Prostate gland (tissue), 2 donors: ENCODE measurements at regions of chr3 and their contacts with region 1.

Region 1: DNA sequence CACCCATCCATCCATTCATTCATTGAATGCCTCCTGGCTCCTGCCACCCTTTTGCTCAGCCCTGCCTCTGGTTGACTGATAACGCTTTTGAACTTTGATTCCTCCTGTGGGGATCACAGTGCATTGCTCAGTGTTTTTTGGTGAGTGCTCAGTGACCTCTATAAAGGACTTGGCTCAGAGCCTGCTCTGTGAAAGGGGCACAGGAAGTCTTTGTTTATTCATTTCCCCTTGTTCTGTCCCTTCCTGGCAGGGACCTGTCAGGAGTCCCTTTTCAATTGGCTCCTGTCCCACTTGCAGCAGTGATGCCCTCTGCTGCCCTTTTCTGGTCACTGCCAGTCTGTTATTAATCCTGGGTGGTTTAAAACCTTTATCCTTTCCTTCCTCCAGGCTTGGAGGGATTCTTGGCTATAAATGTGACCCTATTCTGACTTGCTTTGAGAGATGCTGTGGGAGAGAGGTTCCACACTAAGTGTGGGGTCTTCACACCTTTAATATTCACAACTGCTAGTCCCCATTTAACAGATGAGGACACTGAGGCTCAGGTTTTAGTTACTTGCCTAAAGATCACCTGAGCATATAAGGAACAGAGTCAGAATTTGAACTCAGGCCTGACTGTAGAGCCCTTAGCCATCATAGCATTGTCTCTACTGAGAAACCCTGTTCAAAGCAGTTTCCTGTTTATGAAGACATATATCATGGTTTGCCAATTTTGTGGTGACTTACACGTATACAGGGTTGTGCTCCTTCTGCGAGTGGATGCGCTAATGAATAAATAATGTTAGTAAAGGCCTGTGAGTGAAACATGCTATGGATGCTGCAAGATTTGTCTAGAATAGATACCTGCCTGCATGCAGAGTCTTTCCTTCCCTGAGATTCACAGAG is 23.2 kb upstream of the TATDN2 start:
- DNase-seq: peak; percentile 70
- H3K4me3 ChIP-seq: no peak overlapping the region
- H3K27ac ChIP-seq: no peak overlapping the region
- H3K4me1 ChIP-seq: no peaks in the 10 kb centered on the region
- H3K27me3 ChIP-seq: no peaks in the 10 kb centered on the region
- CTCF ChIP-seq: peak; percentile 55 to 91 (median 87)
- POLR2A ChIP-seq: no peak

Region 2: DNA sequence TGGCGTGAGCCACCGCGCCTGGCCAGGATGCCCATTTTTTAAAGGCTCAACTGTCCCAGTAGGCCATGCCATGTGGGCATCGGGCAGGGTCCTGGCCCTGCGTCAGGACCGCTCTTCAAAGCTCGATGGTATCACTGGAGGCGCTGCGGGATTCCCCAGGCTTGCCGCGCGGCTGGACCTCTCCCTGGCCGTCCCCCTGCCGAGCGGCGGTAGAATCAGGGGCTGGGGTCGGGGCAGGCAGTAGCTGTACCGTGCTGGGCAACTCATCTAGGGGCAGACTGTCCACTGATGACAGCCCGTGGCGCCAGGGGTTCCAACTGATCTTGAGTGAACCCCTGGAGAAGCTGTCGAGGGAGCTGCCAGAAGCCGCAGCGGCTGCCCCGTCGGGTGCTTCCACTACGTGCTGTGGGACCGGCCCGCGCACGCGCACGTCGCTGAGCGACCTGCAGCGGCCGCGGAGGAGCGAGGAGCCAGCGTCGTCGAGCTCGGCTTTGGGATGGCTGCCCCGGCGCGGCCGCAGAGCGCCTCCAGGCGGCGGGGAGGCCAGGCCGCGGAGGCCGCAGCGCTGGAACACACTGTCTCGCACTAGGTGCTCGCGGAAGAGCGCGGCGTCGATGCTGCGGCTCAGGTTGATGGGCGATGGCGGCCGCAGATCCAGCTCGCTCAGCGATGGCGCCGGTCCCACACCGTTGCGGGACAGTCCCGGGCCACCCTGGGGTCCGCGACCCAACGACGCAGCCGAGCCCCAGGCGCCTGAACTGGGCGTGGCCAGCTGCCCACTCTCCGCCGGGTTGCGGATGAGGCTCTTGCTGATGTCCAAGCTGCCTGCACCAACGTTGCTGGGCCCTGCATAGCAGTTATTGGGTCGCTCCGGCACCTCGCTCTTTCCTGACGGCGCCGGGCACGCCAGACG is 278.7 kb before region 1 on chr3:
- intact Hi-C with region 1: loop called (anchors 10 kb)
- DNase-seq: peak; percentile 79
- H3K4me3 ChIP-seq: peak overlapping the region; percentile 31 to 44
- H3K27ac ChIP-seq: peak overlapping the region; percentile 77 to 81
- H3K4me1 ChIP-seq: no peaks in the 10 kb centered on the region
- H3K27me3 ChIP-seq: no peaks in the 10 kb centered on the region
- CTCF ChIP-seq: peak; percentile 43 to 93 (median 66)
- POLR2A ChIP-seq: peak; percentile 55

Region 3: DNA sequence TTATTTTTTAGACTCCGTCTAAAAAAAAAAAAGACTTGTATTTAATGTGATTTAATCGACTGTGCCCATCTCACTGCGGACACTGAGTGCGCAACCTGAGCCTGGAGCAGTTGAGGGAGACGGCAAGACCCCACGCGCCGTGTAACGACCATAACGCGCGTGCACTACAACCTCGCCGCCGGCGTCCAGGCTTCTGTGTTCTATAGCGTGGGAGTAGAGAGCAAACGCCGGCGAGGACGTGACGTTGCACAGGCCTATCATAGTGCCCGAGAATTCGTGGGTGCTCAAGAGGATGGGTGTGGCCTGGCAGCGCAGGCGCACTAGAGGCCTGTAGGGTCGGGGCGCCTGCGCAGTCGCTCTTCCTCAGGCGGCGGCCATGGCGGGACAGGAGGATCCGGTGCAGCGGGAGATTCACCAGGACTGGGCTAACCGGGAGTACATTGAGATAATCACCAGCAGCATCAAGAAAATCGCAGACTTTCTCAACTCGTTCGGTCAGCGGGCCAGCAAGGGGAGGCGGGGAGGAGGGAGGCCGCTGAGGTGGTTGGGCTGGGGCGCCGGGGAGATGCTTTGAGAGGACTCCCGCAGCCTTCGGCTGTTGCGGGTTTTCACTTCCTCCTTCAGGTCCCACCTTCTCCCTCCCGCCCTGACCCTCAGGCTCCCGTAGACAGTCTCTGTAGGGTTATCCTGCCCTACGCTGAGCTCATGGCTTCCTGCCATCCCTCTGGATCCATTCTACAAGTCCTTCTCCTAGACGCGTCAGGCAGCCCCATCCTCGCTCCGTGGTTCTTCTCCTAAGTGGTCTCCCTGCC is 109.5 kb before region 1 on chr3 and contains the start of gene BRK1:
- intact Hi-C with region 1: loop called (anchors 10 kb)
- DNase-seq: peak; percentile 94
- H3K4me3 ChIP-seq: peak within 1 kb of the TSS; percentile 75 to 84
- H3K27ac ChIP-seq: peak within 1 kb of the TSS; percentile 68 to 74
- H3K4me1 ChIP-seq: no peaks in the 10 kb centered on the region
- H3K27me3 ChIP-seq: no peaks in the 10 kb centered on the region
- CTCF ChIP-seq: peak in 2 of 4 experiments; percentile 21 to 27
- POLR2A ChIP-seq: peak; percentile 83
- total RNA-seq, gene BRK1: 118 to 126 TPM

Region 4: DNA sequence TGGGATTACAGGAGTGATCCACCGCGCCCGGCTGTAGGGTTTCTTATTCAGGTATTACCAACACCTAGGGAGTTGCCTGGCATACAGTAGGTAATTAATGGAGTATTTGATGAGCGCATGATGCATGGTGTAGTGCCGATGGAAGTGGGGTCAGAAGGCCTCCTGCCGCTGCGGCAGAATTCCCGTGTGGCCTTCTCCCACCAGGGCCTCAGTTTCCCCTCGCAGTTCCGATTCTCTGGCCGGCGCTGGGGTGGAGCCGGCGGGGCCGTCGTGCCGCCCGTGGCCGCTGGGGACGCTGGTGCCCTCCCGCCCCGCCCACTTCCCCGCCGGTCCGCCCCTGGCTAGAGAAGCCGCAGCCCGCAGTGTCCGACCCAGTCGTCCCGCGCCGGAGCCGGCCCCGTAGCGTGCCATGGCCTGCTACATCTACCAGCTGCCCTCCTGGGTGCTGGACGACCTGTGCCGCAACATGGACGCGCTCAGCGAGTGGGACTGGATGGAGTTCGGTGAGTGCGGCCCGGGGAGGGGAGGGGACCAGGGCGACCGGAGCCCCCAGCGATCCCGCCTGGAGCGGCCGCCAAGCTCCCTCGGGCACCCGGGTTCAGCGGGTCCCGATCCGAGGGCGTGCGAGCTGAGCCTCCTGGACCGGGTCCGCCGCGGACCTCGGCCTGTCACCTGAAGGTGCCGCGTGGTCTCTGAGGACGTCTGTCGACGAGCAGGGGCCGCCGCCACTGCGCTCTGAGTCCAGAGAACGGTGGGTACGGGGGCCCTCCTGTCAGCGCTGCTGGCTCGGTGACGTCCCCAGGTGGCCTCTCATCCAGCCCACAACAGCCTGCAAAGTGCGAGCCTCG is 60.3 kb before region 1 on chr3 and contains the start of gene IRAK2:
- intact Hi-C with region 1: loop called (anchors 2 kb)
- DNase-seq: peak; percentile 72
- H3K4me3 ChIP-seq: peak within 1 kb of the TSS; percentile 55 to 82
- H3K27ac ChIP-seq: peak within 1 kb of the TSS; percentile 55 to 78
- H3K4me1 ChIP-seq: no peaks in the 10 kb centered on the region
- H3K27me3 ChIP-seq: no peaks in the 10 kb centered on the region
- CTCF ChIP-seq: peak; percentile 77 to 87 (median 84)
- POLR2A ChIP-seq: peak; percentile 76
- total RNA-seq, gene IRAK2: 5.1 to 7.6 TPM